ENCODE measurements at regions of chr3 and their contacts with region 1.

Region 1: GRCh38 chr3:149042789-149043386 is 43.4 kb downstream of the HLTF start:
- DNase-seq: peak; percentile 72
- ATAC-seq: peak; percentile 46; the same call in 1 of the 2 replicates
- H3K4me3 ChIP-seq: no peak overlapping the region
- H3K27ac ChIP-seq: no peak overlapping the region
- H3K4me1 ChIP-seq: no peaks in the 10 kb centered on the region; the same call in 1 of the 2 replicates
- H3K27me3 ChIP-seq: no peaks in the 10 kb centered on the region
- CTCF ChIP-seq: no peak
- POLR2A ChIP-seq: no peak
- RAD21 ChIP-seq: no peak

Region 2: GRCh38 chr3:148420242-148420641 is 622.6 kb before region 1 on chr3:
- CTCF ChIA-PET with region 1: no interaction called
- POLR2A ChIA-PET with region 1: no interaction called
- dilution Hi-C with region 1: no loop called
- in situ Hi-C with region 1: no loop called
- intact Hi-C with region 1: no loop called
- DNase-seq: no peak
- ATAC-seq: no peak
- H3K4me3 ChIP-seq: no peak overlapping the region
- H3K27ac ChIP-seq: no peak overlapping the region
- H3K4me1 ChIP-seq: no peaks in the 10 kb centered on the region
- H3K27me3 ChIP-seq: no peaks in the 10 kb centered on the region
- CTCF ChIP-seq: no peak
- POLR2A ChIP-seq: no peak
- RAD21 ChIP-seq: no peak

Region 3: GRCh38 chr3:149077628-149078027 is 34.7 kb after region 1 on chr3:
- CTCF ChIA-PET with region 1: interaction called, 4 read pairs
- POLR2A ChIA-PET with region 1: no interaction called
- dilution Hi-C with region 1: no loop called
- in situ Hi-C with region 1: no loop called
- intact Hi-C with region 1: loop called (anchors 5 kb)
- DNase-seq: peak; percentile 43
- ATAC-seq: peak; percentile 75
- H3K4me3 ChIP-seq: no peak overlapping the region
- H3K27ac ChIP-seq: no peak overlapping the region
- H3K4me1 ChIP-seq: no peaks in the 10 kb centered on the region
- H3K27me3 ChIP-seq: no peaks in the 10 kb centered on the region
- CTCF ChIP-seq: no peak
- POLR2A ChIP-seq: no peak
- RAD21 ChIP-seq: no peak